Testis (tissue), 5 donors: ENCODE measurements at regions of chr10 and their contacts with region 1.

Region 1: GRCh38 chr10:123582084-123582989 is 83.8 kb upstream of the GPR26 start:
- DNase-seq: peak; percentile 87
- H3K4me3 ChIP-seq: no peak overlapping the region
- H3K27ac ChIP-seq: no peak overlapping the region
- H3K4me1 ChIP-seq: no peaks in the 10 kb centered on the region
- H3K27me3 ChIP-seq: no peaks in the 10 kb centered on the region
- CTCF ChIP-seq: peak; percentile 37 to 82 (median 68)
- POLR2A ChIP-seq: no peak

Region 2: GRCh38 chr10:123759501-123760031 is 177.2 kb after region 1 on chr10:
- intact Hi-C with region 1: no loop called
- DNase-seq: no peak
- H3K4me3 ChIP-seq: no peak overlapping the region
- H3K27ac ChIP-seq: no peak overlapping the region
- H3K4me1 ChIP-seq: no peaks in the 10 kb centered on the region
- H3K27me3 ChIP-seq: no peaks in the 10 kb centered on the region
- CTCF ChIP-seq: no peak
- POLR2A ChIP-seq: no peak

Region 3: GRCh38 chr10:123967396-123968243 is 385.3 kb after region 1 on chr10:
- intact Hi-C with region 1: loop called (anchors 5 kb)
- DNase-seq: peak; percentile 89
- H3K4me3 ChIP-seq: no peak overlapping the region
- H3K27ac ChIP-seq: peak overlapping the region; percentile 34 to 67
- H3K4me1 ChIP-seq: peaks cover 16% of the 10 kb centered on the region
- H3K27me3 ChIP-seq: no peaks in the 10 kb centered on the region
- CTCF ChIP-seq: peak; percentile 86 to 94 (median 90)
- POLR2A ChIP-seq: no peak

Region 4: DNA sequence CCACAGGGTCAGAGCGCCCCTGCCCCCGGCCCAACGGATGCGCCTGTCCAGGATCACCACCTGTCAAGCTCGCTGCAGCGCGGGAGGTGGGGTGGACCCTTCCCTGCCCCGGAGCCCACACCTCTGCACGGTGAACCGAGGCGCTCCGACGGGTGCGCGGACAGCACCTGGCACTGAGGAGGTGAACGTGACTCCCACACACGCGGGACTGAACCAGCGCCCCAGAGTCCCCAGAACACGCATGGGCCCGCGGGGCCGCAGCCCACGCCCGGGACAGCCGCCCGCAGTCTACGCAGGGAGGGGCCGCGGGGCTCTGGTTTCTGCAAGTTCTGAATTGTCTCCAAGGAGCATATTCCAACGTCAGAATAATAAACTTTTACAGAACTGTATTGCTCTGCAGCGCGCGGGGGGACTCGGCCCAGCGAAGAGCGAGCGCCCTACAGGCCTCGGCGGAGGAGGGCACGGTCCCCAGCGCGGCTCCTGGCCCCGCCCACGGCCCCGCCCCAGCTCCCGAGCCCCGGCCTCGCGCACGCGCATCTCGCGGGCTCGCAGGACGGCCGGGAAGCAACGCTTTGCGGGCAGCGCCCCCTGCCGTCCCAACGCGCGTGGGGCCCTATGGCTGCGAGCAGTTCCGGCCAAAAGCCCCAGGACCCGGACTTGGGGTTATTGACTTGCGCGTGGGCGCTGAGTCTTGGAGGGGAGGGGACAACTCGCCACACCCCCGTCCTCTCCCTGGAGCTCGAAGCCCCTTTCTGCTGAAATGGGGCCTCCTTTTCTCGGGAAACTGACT is 806.7 kb after region 1 on chr10:
- intact Hi-C with region 1: loop called (anchors 10 kb)
- DNase-seq: peak; percentile 90
- H3K4me3 ChIP-seq: peak overlapping the region; percentile 51 to 64
- H3K27ac ChIP-seq: no peak overlapping the region
- H3K4me1 ChIP-seq: peaks cover 3% of the 10 kb centered on the region
- H3K27me3 ChIP-seq: no peaks in the 10 kb centered on the region
- CTCF ChIP-seq: peak; percentile 96 to 98 (median 97)
- POLR2A ChIP-seq: no peak